Gastrocnemius medialis (tissue), 4 donors: ENCODE measurements at regions of chr13 and their contacts with region 1.

Region 1: DNA sequence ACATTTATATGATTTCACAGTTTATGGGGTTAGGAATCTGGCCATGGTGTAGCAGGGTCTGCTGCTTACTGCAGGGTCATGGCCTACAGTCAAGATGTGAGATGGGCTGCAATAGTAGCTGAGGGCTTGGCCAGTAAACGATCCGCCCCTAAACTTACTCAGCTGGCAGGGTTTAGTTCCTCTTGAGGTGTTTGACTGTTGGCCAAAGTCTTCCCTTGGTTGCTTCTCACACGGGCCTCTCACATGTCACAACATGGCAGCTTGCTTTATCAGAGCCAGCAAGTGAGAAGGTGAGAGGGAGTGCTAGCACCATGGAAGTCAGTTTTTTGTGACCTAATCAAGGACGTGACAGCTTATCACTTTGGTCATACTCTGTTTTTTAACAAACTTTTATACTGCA is 77.1 kb downstream of the DNAJC3 start:
- DNase-seq: peak in 1 of 2 donors; percentile 45
- ATAC-seq: peak; percentile 52 to 91
- H3K4me3 ChIP-seq: no peak overlapping the region
- H3K27ac ChIP-seq: no peak overlapping the region
- H3K4me1 ChIP-seq: peaks cover 15 to 22% of the 10 kb centered on the region in 2 donors
- H3K27me3 ChIP-seq: no peaks in the 10 kb centered on the region
- CTCF ChIP-seq: no peak
- POLR2A ChIP-seq: no peak

Region 2: DNA sequence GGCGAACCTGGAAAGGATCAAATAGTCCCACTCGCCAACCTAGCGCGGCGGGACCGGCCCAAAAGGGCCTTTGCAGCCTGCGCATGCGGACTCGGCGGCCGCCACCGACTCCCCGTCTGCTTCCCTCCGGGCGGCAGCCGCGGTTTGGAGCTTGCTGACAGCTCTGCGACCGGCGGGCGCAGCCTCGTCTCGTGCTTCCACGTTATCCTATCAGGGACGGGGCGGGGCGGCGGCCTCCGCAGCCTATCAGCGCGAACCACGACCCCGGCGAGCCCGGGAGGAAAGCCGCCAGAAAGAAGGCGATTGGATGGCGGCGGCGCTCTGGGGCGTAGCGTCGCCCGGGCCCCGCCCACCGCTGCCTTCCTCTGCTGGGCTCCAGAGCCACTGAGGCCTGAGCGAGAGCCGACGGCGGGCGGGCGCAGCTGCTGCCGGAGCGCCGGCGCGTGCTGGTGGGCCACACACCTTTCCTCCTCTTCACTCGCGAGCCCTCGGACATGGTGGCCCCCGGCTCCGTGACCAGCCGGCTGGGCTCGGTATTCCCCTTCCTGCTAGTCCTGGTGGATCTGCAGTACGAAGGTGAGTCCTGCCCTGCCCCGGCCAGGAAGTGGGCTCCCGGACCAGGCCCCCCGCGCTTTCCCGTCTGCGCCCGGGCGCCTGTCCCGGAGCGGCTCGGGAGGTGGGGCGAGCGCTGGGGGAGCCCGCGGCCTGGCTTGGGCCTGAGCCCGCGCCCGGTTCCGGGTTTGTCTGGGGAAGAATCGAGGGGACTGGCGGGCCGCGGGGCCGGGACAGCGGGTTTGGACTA is 77.1 kb before region 1 on chr13 and contains the start of gene DNAJC3:
- in situ Hi-C with region 1: no loop called
- intact Hi-C with region 1: loop called (anchors 5 kb)
- DNase-seq: peak; percentile 98 to 99
- ATAC-seq: peak; percentile 83 to 85
- H3K4me3 ChIP-seq: peak within 1 kb of the TSS; percentile 77 to 98 (median 82)
- H3K27ac ChIP-seq: peak within 1 kb of the TSS; percentile 98 to 99 (median 98)
- H3K4me1 ChIP-seq: peaks cover 56 to 60% of the 10 kb centered on the region in 2 donors
- H3K27me3 ChIP-seq: no peaks in the 10 kb centered on the region
- CTCF ChIP-seq: no peak
- POLR2A ChIP-seq: peak; percentile 99 to 100
- total RNA-seq, gene DNAJC3: 15.7 to 21.6 (median 20.5) TPM